AG04449 (cell line): ENCODE measurements at regions of chr7 and their contacts with region 1.

Region 1: GRCh38 chr7:139645572-139646523 is 122.4 kb downstream of the CLEC2L start:
- DNase-seq: no peak
- H3K4me3 ChIP-seq: no peak overlapping the region
- CTCF ChIP-seq: peak; percentile 83

Region 2: DNA sequence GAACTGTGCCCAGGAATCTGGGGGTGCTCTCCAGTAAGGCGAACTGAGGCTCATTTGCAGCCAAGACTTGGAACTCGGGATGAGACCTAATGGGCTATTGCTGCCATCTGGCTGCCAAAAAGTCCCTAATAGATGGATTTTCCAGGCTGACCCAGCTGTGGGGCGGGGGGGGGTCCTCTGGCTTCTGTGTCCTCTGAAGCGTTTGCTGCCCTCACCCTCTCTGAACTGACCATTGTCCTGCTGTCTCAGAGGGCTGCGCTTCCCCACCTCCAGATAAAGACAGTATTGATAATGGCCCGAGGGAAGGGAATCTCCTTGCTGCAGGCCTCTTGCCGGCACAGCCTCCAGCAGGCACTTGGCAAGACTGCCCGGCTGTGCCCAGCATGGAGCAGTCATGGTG is 75.7 kb before region 1 on chr7:
- CTCF ChIA-PET with region 1: no interaction called
- POLR2A ChIA-PET with region 1: no interaction called
- DNase-seq: no peak
- H3K4me3 ChIP-seq: no peak overlapping the region
- CTCF ChIP-seq: no peak

Region 3: GRCh38 chr7:139602143-139602722 is 43.6 kb before region 1 on chr7:
- CTCF ChIA-PET with region 1: interaction called, 24 read pairs
- POLR2A ChIA-PET with region 1: no interaction called
- DNase-seq: peak; percentile 10
- H3K4me3 ChIP-seq: no peak overlapping the region
- CTCF ChIP-seq: peak; percentile 54

Region 4: DNA sequence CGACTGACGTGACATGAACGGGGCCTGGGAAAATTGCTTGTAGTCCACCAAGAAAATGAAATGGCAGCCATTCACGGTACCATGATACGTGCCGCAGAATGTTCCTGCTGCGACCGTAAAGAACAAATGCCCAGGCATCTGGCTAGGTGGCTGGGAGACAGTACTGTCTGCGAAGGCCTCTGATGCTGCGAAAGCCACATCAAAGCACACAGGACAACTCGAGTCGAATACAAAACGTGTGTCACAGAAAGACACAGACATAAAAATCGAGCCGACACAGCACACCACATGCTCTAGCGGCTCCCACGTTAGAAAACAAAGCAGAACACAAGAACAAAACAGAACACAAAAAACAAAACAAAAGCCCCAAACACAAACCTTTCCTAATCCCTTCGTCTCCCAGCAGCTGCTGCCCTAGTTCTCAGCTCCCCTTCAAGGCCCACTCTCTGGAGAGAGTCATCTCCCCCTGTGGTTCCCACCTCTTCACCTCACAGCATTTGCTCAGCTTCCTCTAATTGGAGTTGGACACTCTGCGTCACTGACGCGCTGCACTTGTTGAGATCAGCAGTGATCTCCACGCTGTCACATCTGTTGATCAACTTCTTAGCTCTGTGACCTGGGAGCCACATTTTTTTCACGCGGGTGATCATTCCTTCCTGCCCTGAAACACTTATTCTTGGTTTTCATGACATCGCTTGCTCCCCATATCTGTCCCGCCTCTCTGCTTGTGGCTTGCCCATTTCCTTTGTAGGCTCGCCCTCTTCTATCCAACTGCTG is 10.1 kb before region 1 on chr7:
- CTCF ChIA-PET with region 1: interaction called, 47 read pairs
- POLR2A ChIA-PET with region 1: no interaction called
- DNase-seq: no peak
- H3K4me3 ChIP-seq: no peak overlapping the region
- CTCF ChIP-seq: no peak

Region 5: DNA sequence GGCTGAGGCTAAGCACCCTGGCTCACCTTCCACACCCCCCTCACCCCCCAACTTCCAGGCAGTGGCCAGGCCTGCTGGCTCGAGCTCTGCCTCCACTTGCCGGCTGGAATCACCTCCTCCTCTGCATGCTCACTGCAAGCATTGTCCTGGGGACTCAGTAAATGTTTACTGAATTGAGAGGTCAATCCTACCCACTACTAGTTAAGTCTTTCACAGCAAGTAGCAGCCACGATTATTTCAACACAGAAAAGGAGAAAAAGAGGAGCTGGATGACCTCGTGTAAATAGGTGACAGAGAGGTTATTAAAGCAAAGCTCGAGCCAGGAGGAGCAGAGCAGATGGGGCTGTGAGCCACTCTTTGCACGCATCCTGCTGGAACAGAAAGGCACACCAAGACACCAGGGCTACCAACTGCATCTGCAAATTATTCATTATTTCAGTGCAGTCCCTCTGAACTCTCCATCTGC is 99.9 kb after region 1 on chr7:
- CTCF ChIA-PET with region 1: interaction called, 10 read pairs
- POLR2A ChIA-PET with region 1: no interaction called
- DNase-seq: no peak
- H3K4me3 ChIP-seq: no peak overlapping the region
- CTCF ChIP-seq: no peak

Region 6: DNA sequence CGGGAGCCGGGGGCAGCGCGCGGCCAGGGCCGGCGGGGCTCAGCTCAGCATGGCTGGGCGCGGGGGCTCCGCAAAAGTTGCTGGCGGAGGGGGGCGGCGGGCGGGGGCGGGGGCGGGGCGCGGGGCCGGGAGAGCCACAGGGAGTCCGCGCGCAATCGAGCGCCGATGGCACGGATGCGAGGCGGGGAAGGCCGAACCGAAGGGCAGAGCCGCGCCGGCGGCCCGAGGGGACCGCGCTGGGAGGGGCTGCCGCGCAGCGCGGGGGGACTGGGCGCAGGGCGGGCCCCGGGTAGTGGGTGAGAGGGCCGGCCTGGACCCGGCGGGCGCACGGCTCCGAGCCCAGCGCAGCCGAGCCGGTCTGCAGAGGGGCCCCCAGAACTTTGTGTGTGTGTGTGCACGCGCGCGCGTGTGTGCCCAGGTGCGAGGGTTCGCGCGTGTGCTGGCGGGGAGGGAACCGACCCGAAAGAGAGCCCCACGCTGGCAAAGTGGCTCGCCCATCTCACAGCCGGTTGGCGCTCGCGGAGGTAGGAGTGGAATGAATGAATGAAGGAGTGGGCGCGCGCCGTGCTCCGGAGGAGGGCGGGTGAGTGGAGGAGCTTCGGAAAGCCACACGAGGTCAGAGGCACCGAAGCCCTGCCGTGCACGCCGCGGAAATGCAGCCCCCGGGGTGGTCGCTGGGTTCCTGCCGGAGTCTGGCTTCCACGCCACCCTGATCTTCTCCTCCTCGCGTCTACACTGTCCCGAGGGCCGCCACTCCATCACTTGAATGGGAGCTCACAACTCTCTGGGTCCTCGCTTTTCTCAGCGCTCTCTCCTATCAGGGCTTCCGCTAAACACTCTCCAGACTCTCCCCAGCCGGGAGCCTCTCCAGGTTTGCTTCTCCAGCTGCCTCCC is 132.3 kb after region 1 on chr7 and contains the start of gene HIPK2:
- CTCF ChIA-PET with region 1: interaction called, 38 read pairs
- POLR2A ChIA-PET with region 1: no interaction called
- DNase-seq: no peak
- H3K4me3 ChIP-seq: peak within 1 kb of the TSS; percentile 76
- CTCF ChIP-seq: no peak

Region 7: GRCh38 chr7:139976838-139977656 is 331.2 kb after region 1 on chr7:
- CTCF ChIA-PET with region 1: interaction called, 15 read pairs
- POLR2A ChIA-PET with region 1: no interaction called
- DNase-seq: no peak
- H3K4me3 ChIP-seq: no peak overlapping the region
- CTCF ChIP-seq: no peak